ENCODE measurements at regions of chr19 and their contacts with region 1.

Region 1: GRCh38 chr19:48835734-48836088 is 580 bp downstream of the HSD17B14 start:
- DNase-seq: peak; percentile 97
- ATAC-seq: peak; percentile 92
- H3K4me3 Mint-ChIP-seq: peak overlapping the region; percentile 76
- H3K27ac Mint-ChIP-seq: peak overlapping the region; percentile 86
- H3K4me1 Mint-ChIP-seq: peaks cover 16% of the 10 kb centered on the region
- H3K27me3 Mint-ChIP-seq: no peaks in the 10 kb centered on the region

Region 2: DNA sequence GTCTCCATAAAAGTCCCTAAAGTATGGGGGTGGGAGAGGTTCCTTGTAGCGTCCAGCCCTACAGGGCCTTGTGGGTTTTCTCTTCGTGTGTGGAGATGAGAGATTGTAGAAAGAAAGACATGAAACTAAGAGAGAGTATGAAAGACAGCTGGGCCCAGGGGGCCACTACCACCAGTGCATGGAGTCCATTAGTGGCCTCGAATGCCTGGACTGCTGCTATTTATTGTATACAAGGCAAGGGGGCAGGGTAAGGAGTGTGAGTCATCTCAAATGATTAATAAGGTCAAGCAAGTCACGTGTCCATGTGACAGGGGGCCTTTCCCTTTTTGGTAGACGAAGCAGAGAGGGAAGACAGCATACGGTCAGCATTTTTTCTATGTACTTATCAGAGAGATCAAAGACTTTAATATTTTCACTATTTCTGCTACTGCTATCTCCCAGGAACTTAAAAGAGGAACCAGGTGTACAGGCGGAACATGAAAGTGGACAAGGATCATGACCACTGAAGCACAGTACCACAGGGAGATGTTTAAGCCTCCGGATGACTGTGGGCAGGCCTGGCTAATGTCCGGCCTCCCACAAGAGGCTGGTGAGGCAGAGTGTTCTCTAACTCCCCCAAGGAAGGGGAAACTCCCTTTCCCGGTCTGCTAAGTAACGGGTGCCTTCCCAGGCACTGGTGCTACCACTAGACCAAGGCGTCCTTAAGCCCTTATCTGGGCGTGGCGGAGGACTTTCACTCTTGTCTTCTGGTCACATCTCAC is 54.9 kb before region 1 on chr19:
- CTCF ChIA-PET with region 1: interaction called, 37 read pairs
- DNase-seq: no peak
- ATAC-seq: no peak
- H3K4me3 Mint-ChIP-seq: no peak overlapping the region
- H3K27ac Mint-ChIP-seq: no peak overlapping the region
- H3K4me1 Mint-ChIP-seq: peaks cover 6% of the 10 kb centered on the region
- H3K27me3 Mint-ChIP-seq: peaks cover 25% of the 10 kb centered on the region

Region 3: DNA sequence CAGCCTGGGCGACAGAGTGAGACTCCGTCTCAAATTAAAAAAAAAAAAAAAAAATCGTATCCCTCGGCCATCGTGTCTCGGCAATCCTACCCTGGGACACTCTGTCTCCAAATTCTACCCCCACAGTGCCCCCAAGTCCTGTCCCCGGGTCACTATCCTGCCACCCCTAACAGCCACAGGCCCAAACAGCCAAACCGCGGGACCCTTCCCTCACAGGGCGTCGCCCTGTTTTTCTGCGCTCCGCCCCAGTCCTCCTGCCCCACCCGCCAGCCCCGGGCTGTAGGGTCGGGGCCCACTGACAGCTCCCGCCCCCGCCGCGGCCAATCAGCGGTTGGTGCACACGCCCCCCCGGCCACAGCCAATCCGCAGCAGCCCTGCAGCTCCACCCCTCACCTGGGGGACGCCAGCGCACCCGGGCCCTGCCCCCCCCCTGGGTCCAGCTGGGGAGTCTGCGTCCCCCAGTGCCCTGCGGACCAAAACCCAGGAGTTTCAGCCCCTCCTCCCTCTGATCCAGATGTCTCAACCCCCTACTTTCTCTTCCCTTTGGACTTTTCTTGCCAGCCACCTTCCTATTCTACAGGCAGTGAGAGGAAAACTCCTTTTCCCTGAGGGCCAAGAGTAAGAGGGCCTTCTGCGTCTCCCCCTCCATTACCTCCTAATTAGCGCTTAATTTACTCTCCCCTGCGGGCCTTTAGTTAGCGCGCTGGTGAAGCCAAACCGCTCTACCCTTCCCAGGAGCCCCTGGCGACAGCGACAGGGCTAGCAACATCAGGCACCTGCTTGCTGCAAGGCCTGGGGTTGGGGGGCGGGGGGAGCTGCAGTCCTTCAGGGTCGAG is 23.4 kb before region 1 on chr19:
- CTCF ChIA-PET with region 1: interaction called, 25 read pairs
- DNase-seq: peak; percentile 81
- ATAC-seq: peak; percentile 67
- H3K4me3 Mint-ChIP-seq: peak overlapping the region; percentile 71
- H3K27ac Mint-ChIP-seq: peak overlapping the region; percentile 74
- H3K4me1 Mint-ChIP-seq: peaks cover 27% of the 10 kb centered on the region
- H3K27me3 Mint-ChIP-seq: no peaks in the 10 kb centered on the region

Region 4: DNA sequence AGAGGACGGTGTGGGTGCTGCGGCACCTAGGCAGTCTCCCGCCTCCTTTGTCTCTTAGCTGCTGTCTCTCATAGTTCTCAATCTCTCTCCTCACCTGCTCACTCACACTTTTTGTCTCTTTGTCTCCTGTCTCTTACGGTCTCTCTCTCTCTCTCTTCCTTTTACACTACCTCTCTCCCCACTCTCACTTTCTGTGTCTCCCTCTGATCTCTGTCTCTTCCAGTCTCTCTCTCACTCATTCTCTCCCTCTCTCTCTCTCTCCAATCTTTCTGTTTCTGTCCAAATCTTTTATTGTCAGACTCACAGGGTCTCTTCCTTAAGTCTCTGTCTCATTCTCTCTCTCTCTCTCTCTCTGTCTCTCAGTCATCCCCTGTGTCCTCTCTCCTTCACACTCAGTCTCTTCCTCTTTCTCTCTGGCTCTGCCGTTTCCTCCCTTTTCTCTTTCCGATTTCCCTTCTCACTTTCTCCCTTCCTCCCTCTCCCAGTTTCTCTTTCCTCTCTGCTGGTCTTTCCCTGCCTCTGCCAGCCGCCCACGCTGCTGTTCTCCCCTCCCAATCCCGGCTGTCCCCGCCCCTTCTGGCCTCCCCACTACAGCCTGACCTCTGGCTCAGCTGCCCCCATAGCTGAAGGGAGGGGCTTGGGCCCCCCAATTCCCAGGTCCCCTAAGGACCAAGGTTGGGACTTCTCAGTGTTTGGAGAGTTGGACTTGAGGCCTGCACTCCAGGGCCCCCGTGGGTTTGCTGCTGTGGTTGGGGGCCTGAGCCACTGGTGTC is 32.6 kb after region 1 on chr19 and contains the start of gene PLEKHA4:
- CTCF ChIA-PET with region 1: no interaction called
- DNase-seq: no peak
- ATAC-seq: no peak
- H3K4me3 Mint-ChIP-seq: no peak within 1 kb of the TSS
- H3K27ac Mint-ChIP-seq: no peak within 1 kb of the TSS
- H3K4me1 Mint-ChIP-seq: peaks cover 10% of the 10 kb centered on the region
- H3K27me3 Mint-ChIP-seq: peaks cover 17% of the 10 kb centered on the region
- total RNA-seq, gene PLEKHA4: 2.2 to 5.6 TPM